Astrocyte of the cerebellum (primary cell): ENCODE measurements at regions of chr11 and their contacts with region 1.

Region 1: DNA sequence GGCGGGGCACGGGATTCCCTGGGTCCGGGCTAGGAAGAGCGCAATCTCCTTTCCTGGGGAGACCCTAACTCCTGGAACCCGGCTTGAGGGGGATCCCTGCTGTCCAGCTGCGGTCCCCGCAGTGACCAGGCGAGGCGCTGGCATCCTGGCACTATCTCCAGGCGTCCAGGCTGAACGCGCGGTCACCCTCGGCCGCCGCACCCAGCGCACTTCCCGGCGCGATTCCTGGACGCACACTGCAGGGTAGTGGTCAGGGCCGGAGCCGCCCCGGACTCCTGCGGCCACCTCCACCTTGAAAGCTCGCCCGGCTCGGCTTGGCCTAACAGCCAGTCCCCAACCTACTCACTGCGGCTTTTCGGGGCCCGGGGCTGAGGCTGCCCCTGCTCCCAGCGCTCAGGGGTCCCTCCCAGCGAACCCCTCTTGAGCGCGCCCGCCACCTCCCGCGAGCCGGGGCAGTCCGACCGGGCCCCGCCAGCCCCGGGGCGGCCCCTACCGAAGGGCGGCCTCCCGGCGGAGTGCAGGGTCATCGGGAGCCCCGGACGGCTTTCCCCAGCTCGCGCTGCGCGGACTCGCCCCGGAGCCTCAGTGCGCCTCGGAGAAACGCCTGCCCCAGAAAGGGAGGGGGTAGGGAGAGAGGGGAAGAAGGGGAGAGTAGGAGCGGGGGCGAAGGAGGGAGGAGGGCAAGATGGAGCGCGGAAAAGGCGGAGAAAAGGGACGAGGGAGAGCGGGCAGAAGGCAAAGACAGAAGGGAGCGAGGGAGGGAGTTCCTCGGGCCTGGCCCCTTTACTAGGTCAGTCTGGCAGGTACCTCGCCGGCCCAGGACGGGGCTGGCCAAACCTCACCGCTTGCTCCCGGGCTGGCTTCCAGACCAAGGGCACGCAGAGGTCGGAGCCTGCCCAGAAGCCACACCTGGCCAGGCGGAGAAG is 1.0 kb downstream of the POU2AF3 start:
- DNase-seq: no peak
- H3K4me3 ChIP-seq: peak overlapping the region; percentile 53
- CTCF ChIP-seq: peak; percentile 58

Region 2: GRCh38 chr11:111259896-111260295 is 39.5 kb before region 1 on chr11:
- in situ Hi-C with region 1: no loop called
- DNase-seq: no peak
- H3K4me3 ChIP-seq: no peak overlapping the region
- CTCF ChIP-seq: no peak

Region 3: GRCh38 chr11:111446404-111447111 is 147.2 kb after region 1 on chr11:
- in situ Hi-C with region 1: loop called (anchors 25 kb)
- DNase-seq: peak; percentile 80
- H3K4me3 ChIP-seq: no peak overlapping the region
- CTCF ChIP-seq: peak; percentile 92